PC-9 (cell line): ENCODE measurements at regions of chr1 and their contacts with region 1.

Region 1: GRCh38 chr1:116570358-116571200 is at the start of gene CD58:
- DNase-seq: peak; percentile 79 to 83
- H3K4me3 ChIP-seq: peak within 1 kb of the TSS; percentile 85
- H3K27ac ChIP-seq: peak within 1 kb of the TSS; percentile 90
- H3K4me1 ChIP-seq: peaks cover 37% of the 10 kb centered on the region
- H3K27me3 ChIP-seq: no peaks in the 10 kb centered on the region
- CTCF ChIP-seq: peak; percentile 78
- total RNA-seq, gene CD58: 15.9 and 23.6 TPM in 2 replicates

Region 2: GRCh38 chr1:115557715-115558114 is 1012.9 kb before region 1 on chr1:
- CTCF ChIA-PET with region 1: no interaction called
- POLR2A ChIA-PET with region 1: no interaction called
- intact Hi-C with region 1: loop called (anchors 10 kb)
- DNase-seq: no peak
- H3K4me3 ChIP-seq: no peak overlapping the region
- H3K27ac ChIP-seq: no peak overlapping the region
- H3K4me1 ChIP-seq: no peaks in the 10 kb centered on the region
- H3K27me3 ChIP-seq: no peaks in the 10 kb centered on the region
- CTCF ChIP-seq: no peak

Region 3: DNA sequence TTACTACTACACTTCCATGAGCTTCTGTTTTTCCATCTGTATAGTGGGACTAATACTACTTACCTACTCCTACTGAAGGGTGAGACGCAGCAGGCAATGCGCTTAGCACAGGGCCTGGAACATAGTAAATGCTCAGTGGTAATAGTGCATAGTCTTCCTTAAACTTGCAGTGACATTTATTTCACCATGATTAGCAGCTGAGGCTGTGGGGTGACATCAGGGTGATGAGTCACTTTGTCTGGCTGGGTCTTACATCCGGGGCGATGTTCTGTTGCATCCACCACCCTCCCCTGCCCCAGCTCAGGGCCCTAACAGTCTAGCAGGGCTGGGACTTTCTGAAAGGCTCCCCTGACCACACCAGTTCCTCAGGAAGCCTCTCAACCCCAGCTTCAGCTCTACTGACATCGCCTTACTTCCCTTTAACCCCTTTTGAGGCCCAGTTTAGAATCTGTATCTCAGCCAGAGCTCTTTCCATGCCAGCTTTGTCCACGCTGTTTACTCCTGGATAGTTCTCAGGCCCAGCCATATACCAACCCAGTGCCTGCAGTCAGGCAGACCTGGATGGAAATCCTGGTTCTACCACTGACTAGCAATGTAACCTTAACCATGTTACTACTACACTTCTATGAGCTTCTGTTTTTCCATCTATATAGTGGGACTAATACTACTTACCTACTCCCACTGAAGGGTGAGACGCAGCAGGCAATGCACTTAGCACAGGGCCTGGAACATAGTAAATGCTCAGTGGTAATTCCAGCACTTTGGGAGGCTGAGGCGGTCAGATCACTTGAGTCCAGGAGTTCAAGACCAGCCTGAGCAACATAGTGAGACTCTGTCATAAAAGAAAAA is 66.0 kb before region 1 on chr1:
- CTCF ChIA-PET with region 1: no interaction called
- POLR2A ChIA-PET with region 1: no interaction called
- intact Hi-C with region 1: loop called (anchors 1 kb)
- DNase-seq: peak; percentile 67 to 92
- H3K4me3 ChIP-seq: no peak overlapping the region
- H3K27ac ChIP-seq: peak overlapping the region; percentile 86
- H3K4me1 ChIP-seq: peaks cover 67% of the 10 kb centered on the region
- H3K27me3 ChIP-seq: no peaks in the 10 kb centered on the region
- CTCF ChIP-seq: no peak

Region 4: DNA sequence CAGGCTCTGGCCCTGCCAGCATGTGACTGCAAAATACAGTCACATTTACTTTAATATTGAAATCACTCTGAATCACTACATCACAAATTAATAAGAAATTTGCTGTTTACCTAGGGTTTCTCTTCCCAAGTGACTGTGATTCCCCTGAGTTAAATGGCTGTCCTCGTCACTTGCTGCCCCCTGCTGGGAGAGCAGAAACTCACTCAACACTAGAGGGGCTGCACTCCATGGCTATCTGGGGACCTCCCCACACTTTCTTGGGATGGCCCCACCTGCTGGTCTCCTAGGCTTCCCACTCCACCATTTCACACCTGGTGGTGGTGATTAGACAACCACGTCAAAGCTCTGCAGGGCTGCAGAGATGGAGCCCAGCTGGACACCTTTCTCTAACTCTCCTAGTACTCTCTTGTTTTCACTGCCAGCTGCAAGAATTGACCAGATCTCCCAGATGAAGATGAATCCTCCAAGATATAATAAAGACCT is 247.0 kb after region 1 on chr1:
- CTCF ChIA-PET with region 1: no interaction called
- POLR2A ChIA-PET with region 1: no interaction called
- intact Hi-C with region 1: loop called (anchors 1 kb)
- DNase-seq: peak; percentile 52 to 76
- H3K4me3 ChIP-seq: no peak overlapping the region
- H3K27ac ChIP-seq: no peak overlapping the region
- H3K4me1 ChIP-seq: no peaks in the 10 kb centered on the region
- H3K27me3 ChIP-seq: no peaks in the 10 kb centered on the region
- CTCF ChIP-seq: peak; percentile 94

Region 5: GRCh38 chr1:116909510-116910378 is 339.2 kb after region 1 on chr1 and contains the start of gene PTGFRN:
- CTCF ChIA-PET with region 1: no interaction called
- POLR2A ChIA-PET with region 1: no interaction called
- intact Hi-C with region 1: loop called (anchors 10 kb)
- DNase-seq: peak; percentile 53 to 68
- H3K4me3 ChIP-seq: peak within 1 kb of the TSS; percentile 77
- H3K27ac ChIP-seq: peak within 1 kb of the TSS; percentile 21
- H3K4me1 ChIP-seq: peaks cover 56% of the 10 kb centered on the region
- H3K27me3 ChIP-seq: no peaks in the 10 kb centered on the region
- CTCF ChIP-seq: no peak
- total RNA-seq, gene PTGFRN: 83.7 and 87.3 TPM in 2 replicates